ENCODE measurements at regions of chr12 and their contacts with region 1.

Region 1: GRCh38 chr12:96766232-96766631 is 140.8 kb upstream of the NEDD1 start:
- DNase-seq: no peak
- ATAC-seq: no peak
- H3K4me3 ChIP-seq: no peak overlapping the region
- H3K27ac ChIP-seq: no peak overlapping the region
- H3K4me1 ChIP-seq: no peaks in the 10 kb centered on the region
- H3K27me3 ChIP-seq: no peaks in the 10 kb centered on the region
- CTCF ChIP-seq: peak; percentile 20; the same call in 1 of the 2 replicates

Region 2: GRCh38 chr12:96846293-96846692 is 80.1 kb after region 1 on chr12:
- CTCF ChIA-PET with region 1: interaction called, 10 read pairs
- POLR2A ChIA-PET with region 1: no interaction called
- in situ Hi-C with region 1: no loop called
- intact Hi-C with region 1: no loop called
- DNase-seq: no peak
- ATAC-seq: no peak
- H3K4me3 ChIP-seq: no peak overlapping the region
- H3K27ac ChIP-seq: no peak overlapping the region
- H3K4me1 ChIP-seq: no peaks in the 10 kb centered on the region
- H3K27me3 ChIP-seq: no peaks in the 10 kb centered on the region
- CTCF ChIP-seq: no peak

Measured in Panc1 (cell line).